ENCODE measurements at regions of chr2 and their contacts with region 1.

Region 1: DNA sequence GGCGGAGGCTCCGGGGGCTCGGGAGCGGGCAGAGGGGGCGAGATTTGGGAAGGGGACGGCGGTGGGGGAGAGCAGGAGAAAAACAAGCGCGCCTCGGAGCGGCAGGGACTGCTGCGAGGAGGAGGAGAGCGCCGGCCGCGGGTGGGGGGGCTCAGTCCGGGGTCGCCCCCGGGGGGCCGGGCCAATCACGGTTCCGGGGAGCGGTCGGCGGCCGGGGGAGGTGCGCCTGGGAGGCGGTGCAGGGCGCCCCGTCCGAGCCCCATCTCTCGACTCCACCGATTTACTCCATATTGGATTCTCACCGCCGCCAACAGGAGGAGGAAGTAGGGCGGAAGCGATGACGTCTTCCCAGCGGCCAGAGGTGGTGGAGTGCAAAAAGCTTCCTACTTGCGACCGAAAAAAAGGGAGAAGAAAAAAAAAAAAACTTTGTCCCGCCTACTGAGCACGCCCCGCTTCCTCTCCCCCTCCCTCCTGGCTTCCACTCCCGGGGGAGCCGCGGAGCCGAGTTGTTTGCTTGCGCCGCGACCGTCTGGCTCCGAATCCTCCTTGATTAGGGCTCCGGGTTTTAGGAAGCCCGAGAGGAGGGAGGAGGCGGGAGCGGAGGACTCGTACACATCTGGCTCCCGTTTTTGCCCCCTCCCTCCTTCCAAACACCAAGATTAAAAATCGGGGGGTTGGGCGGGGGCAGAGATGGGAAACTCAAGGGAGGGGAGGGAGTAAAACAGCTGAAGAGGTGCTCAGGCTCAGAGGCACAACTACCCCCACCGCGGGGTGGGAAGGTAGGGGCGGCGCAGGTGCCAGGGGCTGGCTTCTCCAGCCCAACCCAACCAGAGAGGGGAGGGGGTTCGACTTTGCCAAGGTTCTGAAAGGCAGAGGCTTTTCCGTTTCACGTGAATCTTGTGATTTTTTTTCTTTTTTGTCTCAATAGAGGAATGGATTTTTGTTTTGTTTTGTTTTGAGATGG is at the start of gene SPRED2:
- DNase-seq: peak; percentile 71
- H3K4me3 Mint-ChIP-seq: peak within 1 kb of the TSS; percentile 95
- H3K27ac Mint-ChIP-seq: peak within 1 kb of the TSS; percentile 92
- H3K4me1 Mint-ChIP-seq: peaks cover 24% of the 10 kb centered on the region
- H3K27me3 Mint-ChIP-seq: peaks cover 37% of the 10 kb centered on the region
- total RNA-seq, gene SPRED2: 8.5 and 9.4 TPM in 2 replicates

Region 2: GRCh38 chr2:65129826-65130663 is 302.5 kb before region 1 on chr2 and contains the start of gene RAB1A:
- intact Hi-C with region 1: loop called (anchors 1 kb)
- DNase-seq: peak; percentile 98
- H3K4me3 Mint-ChIP-seq: peak within 1 kb of the TSS; percentile 98
- H3K27ac Mint-ChIP-seq: peak within 1 kb of the TSS; percentile 99
- H3K4me1 Mint-ChIP-seq: peaks cover 30% of the 10 kb centered on the region
- H3K27me3 Mint-ChIP-seq: peaks cover 16% of the 10 kb centered on the region
- total RNA-seq, gene RAB1A: 73.4 and 81.6 TPM in 2 replicates

Region 3: GRCh38 chr2:65264821-65265670 is 167.5 kb before region 1 on chr2:
- intact Hi-C with region 1: loop called (anchors 10 kb)
- DNase-seq: no peak
- H3K4me3 Mint-ChIP-seq: no peak overlapping the region
- H3K27ac Mint-ChIP-seq: no peak overlapping the region
- H3K4me1 Mint-ChIP-seq: peaks cover 17% of the 10 kb centered on the region
- H3K27me3 Mint-ChIP-seq: no peaks in the 10 kb centered on the region

Region 4: DNA sequence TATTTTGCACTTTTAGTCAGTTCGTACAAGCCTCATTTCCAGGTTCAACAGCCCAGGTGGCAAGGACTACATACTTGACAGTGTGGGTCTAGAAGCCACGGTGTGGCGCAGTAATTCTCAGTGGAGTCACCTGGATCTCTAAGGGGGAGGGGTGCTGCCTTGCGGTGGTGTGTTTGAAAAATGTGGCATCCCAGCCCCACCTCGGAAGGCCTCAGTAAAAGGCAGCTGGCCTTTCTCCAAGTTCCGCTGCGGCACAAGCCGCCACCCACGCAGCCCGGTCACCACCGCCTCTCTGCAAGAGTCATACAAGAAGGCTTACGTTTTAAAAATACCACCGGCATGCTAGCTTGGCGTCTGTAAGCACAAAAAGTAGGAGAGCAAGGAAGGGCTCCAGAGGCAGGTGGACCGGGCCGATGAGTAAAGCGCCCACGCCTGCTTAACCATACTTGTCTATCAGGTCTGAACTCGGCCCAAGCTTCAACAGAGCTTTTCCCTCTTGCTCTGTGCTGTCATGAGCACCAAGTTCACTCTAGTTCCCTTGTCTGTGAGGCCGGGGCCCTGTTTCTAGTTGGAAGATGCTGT is 49.6 kb before region 1 on chr2:
- intact Hi-C with region 1: loop called (anchors 1 kb)
- DNase-seq: peak; percentile 63
- H3K4me3 Mint-ChIP-seq: peak overlapping the region; percentile 56
- H3K27ac Mint-ChIP-seq: peak overlapping the region; percentile 62
- H3K4me1 Mint-ChIP-seq: peaks cover 67% of the 10 kb centered on the region
- H3K27me3 Mint-ChIP-seq: peaks cover 7% of the 10 kb centered on the region

Region 5: GRCh38 chr2:65548576-65549256 is 116.2 kb after region 1 on chr2:
- intact Hi-C with region 1: loop called (anchors 1 kb)
- DNase-seq: no peak
- H3K4me3 Mint-ChIP-seq: no peak overlapping the region
- H3K27ac Mint-ChIP-seq: no peak overlapping the region
- H3K4me1 Mint-ChIP-seq: peaks cover 16% of the 10 kb centered on the region
- H3K27me3 Mint-ChIP-seq: peaks cover 16% of the 10 kb centered on the region

Region 6: DNA sequence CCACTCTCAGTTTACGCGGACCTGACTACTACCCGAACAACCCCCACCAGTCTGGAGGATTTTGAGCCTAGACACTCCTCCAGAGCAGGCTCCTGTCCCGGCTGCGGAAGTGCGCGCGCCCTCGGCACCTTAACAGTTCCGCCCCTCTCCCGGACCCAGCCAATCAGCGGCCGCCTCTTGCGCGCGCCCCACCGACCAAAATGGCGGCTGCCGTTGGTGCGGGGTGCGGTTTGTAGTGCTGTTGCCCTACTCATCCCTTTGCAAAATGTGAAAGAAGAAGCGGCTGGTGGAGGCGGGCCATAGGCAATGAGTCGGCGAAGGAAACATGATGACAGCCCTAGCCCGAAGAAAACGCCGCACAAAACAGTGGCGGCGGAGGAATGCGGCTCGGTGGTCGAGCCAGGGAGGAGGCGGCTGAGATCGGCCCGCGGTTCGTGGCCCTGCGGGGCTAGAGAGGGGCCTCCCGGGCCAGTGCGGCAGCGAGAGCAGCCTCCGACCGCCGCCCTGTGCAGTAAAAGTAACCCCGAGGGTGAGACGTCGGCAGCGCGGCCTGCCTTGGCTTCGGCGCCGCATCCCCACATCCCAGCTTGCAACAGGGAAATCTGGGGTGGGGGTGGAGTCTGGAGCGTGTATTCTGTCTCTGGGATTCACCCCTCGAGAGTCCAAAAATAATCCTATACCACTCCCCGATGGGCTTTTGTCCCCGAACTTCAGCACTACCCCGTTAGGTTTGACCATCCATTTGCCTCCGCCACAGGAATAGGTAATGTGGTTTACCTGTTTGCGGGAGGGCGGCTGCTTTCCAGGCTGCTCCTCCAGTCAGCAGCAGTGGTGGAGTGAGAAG is 1964.9 kb after region 1 on chr2 and contains the start of gene ETAA1:
- intact Hi-C with region 1: loop called (anchors 5 kb)
- DNase-seq: peak; percentile 90
- H3K4me3 Mint-ChIP-seq: peak within 1 kb of the TSS; percentile 97
- H3K27ac Mint-ChIP-seq: peak within 1 kb of the TSS; percentile 99
- H3K4me1 Mint-ChIP-seq: peaks cover 17% of the 10 kb centered on the region
- H3K27me3 Mint-ChIP-seq: peaks cover 2% of the 10 kb centered on the region
- total RNA-seq, gene ETAA1: 9.5 and 10.7 TPM in 2 replicates